Cardiac septum (tissue), 1 donor: ENCODE measurements at regions of chr17 and their contacts with region 1.

Region 1: DNA sequence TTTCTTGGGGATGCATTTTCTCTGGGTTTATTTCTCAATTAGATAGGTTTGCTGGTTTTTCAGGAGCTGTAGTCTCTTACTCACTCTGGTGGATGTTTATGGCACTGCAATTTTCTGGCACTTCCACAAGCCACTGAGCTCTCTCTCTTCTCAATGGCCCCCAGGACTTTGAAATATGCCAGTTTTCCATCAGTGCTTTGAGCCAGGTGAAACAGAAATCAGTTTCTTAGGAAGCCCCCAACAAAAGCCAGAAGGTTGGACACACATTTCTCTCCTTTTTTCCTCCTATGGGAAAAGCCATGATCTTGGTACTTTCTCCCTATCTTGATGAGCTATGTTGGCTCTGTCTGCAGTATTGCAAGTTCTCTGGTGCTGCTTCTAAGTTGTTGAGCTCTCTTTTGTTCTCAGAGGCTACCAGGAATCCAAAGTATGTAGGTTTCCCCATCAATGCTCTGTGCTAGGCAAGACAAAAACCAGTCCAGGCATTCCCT is 90.7 kb upstream of the SMIM36 start:
- DNase-seq: no peak

Region 2: DNA sequence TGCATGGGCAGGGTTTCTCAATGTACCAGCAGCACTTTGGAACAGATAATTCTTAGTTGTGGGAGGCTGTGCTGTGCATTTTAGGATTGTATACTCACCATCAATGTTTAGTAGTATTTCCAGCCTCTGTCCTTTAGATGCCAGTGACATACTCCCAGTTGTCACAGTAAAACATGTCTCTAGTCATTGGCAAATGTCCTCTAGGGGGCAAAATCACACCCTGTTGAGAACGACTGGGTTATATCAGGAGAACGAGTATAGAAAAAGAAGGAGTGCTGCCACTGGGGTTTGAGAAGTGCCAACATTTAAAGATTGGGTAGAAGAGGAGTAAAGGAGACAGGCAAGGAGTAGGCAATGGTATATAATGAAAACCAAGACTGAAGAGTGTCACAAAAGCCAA is 52.8 kb before region 1 on chr17:
- intact Hi-C with region 1: loop called (anchors 5 kb)
- DNase-seq: no peak